ENCODE measurements at regions of chr5 and their contacts with region 1.

Region 1: DNA sequence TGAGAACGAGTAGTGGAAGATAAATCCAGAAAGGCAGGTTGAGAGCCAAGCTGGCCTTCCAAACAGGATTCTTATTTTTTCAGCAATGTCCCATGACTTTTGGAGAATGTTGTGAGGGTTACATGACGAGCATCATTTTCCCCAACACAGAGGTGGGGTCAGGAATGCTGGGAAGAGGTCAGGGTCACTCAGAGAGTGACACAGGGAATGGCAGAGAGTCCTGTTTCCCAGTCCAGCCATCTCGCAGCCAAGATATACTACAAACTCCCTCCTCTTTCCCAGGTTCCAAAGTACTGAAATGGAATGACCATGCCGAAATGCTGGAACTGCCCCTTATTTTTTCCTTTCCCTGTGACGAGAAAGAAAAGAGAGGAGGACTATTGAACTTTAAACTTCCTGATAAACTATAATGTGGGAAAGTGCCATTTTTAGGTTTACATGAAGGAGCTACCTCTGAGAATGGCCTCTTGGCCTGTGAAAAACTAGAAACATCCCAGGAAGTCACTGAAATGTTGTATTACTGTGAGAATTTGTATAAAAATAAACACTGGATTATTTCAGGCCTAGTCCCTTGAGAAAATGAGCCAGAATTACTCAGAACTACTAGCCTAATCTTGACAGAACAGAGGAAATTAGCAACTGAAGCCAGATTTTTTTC is 420.4 kb downstream of the CETN3 start:
- DNase-seq: peak; percentile 56

Region 2: DNA sequence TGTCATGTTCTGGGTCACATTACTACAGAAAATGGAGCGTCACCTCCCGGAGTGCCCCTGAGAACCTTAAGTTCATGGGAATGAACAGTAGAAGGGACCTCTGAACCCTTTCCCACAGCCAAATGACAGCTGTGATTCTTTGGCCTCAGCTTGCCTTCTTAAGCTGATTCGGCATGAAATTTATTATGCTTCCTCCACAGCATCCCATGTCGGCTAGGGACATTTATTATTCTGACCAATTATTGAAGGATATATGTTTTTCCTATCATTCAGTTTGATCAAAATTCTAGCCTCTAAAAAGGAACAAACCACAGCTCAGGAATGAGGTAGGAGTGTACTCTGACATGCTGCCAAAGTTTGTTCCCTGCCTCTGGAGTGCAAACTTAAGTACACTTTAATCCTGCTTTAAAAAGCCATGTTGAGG is 20.2 kb before region 1 on chr5:
- intact Hi-C with region 1: no loop called
- DNase-seq: no peak

Region 3: DNA sequence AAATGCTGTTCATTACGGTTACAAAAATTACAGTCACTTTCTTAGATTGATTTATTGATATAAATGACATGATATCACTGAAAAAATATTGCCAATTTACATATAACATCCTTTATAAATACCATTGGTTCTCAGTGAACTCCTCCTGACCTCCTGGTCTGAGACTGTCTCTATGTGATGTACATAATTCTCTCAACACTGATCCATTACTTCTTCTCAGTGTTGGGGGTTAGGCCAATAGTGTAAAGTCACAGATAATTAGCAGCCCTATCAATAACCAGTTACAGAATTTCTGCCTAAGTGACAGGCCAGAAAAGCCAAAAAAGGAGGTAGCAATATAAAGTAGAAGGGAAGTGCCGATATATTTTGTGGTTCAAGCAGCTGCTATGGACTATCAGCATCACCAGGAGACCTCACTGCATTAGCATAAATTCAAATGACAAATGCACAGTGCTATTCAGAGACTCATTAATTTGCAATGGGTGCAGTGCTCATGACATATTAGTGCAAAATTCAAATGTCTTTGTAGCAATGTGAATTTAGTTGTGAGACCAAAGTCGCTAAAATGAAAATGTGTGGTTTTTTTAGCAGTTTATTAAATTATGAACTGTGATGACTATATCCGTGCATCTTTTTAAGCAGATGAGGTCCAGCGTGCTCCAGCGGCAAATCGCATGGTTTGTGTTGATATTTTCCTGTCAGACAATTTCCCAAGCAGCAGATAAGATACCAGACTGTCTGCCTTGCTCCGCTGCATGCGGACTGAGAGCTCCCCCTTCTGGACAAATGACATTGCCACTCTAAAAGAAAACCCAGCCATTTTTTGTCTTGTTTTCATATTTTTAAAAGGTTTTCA is 275.8 kb after region 1 on chr5:
- intact Hi-C with region 1: loop called (anchors 10 kb)
- DNase-seq: peak; percentile 76

Measured in cardiac septum (tissue), 1 donor.